Head of caudate nucleus (tissue), 42 donors: ENCODE measurements at regions of chr14 and their contacts with region 1.

Region 1: GRCh38 chr14:105414456-105415371 is 4.9 kb upstream of the MTA1 start:
- DNase-seq: peak; percentile 51 to 91 (median 84)

Region 2: GRCh38 chr14:105439691-105440553 is 25.2 kb after region 1 on chr14:
- intact Hi-C with region 1: no loop called
- DNase-seq: no peak

Region 3: DNA sequence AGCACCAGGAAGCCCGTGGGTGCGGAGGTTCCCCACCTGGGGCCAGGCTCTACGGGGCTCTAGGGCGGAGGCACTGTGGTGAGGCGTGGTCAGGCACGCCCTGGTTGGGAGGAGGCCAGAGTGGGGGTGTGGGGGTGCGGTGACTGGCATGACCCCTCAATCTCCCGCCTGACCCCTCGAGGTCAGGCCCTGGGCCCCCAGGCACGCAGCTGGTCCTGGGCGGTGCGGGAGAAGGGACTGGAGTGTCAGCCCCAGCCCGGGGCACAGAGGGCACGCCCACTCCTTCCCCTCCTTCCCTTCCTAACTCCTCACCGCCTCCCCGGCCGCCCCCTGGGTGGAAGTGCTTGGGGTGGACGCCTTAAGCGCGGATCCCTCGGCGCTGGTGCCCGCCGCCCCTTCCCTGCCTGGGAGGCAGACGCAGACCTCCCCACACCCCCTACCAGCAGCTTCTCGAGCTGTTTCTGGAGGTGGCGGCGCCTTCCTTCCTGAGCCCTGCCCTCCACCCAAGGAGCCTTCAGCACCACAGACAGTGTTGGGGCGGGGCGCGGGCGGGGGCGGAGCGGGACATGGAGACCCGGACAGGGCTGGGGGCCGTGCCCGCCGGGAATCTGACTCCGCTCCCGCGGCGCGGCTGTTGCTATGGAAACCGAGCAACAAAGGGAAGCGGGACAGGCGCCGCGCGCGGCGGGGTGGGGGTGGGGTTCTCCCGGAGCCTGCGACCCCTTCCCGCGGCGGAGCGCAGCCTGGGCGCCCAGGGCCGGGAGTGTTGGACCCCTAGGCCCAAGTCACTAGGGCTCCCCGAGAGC is 59.2 kb after region 1 on chr14:
- intact Hi-C with region 1: loop called (anchors 5 kb)
- DNase-seq: peak; percentile 55 to 92 (median 79)